ENCODE measurements at regions of chr15 and their contacts with region 1.

Region 1: GRCh38 chr15:85750319-85750806 is 44.4 kb downstream of the KLHL25 start:
- DNase-seq: no peak
- H3K4me3 ChIP-seq: no peak overlapping the region
- H3K4me3 Mint-ChIP-seq: peak overlapping the region in 1 of 8 donors; percentile 45
- H3K27ac ChIP-seq: no peak overlapping the region
- H3K27ac Mint-ChIP-seq: peak overlapping the region in 2 of 7 donors; percentile 70 to 73
- H3K4me1 ChIP-seq: peaks cover 18% of the 10 kb centered on the region
- H3K4me1 Mint-ChIP-seq: peaks cover 15 to 37% (median 20%) of the 10 kb centered on the region in 4 donors
- H3K27me3 ChIP-seq: no peaks in the 10 kb centered on the region
- H3K27me3 Mint-ChIP-seq: no peaks in the 10 kb centered on the region

Region 2: DNA sequence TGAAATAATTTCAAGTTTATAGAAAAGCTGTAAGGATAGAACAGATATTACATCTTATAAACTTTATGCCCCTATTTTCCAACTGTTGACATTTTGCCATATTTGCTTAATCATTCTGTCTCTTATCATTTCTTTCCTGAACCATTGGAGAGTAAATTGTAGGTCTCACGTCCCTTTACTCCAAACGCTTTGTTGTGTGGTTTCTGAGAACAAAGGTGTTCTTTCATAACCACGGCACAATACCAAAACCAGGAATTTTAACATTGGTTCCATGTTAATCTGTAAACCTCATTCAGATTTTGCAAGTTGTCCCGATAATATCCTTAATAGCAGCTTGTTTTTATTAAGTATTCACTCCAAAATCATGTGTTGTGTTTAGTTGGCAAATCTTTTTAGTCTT is 235.2 kb before region 1 on chr15:
- CTCF ChIA-PET with region 1: no interaction called
- POLR2A ChIA-PET with region 1: no interaction called
- intact Hi-C with region 1: no loop called
- DNase-seq: no peak
- H3K4me3 ChIP-seq: no peak overlapping the region
- H3K4me3 Mint-ChIP-seq: no peak overlapping the region
- H3K27ac ChIP-seq: no peak overlapping the region
- H3K27ac Mint-ChIP-seq: peak overlapping the region in 2 of 7 donors; percentile 5 to 26
- H3K4me1 ChIP-seq: peaks cover 15% of the 10 kb centered on the region
- H3K4me1 Mint-ChIP-seq: peaks cover 45 to 72% (median 59%) of the 10 kb centered on the region in 4 donors
- H3K27me3 ChIP-seq: no peaks in the 10 kb centered on the region
- H3K27me3 Mint-ChIP-seq: no peaks in the 10 kb centered on the region

Region 3: DNA sequence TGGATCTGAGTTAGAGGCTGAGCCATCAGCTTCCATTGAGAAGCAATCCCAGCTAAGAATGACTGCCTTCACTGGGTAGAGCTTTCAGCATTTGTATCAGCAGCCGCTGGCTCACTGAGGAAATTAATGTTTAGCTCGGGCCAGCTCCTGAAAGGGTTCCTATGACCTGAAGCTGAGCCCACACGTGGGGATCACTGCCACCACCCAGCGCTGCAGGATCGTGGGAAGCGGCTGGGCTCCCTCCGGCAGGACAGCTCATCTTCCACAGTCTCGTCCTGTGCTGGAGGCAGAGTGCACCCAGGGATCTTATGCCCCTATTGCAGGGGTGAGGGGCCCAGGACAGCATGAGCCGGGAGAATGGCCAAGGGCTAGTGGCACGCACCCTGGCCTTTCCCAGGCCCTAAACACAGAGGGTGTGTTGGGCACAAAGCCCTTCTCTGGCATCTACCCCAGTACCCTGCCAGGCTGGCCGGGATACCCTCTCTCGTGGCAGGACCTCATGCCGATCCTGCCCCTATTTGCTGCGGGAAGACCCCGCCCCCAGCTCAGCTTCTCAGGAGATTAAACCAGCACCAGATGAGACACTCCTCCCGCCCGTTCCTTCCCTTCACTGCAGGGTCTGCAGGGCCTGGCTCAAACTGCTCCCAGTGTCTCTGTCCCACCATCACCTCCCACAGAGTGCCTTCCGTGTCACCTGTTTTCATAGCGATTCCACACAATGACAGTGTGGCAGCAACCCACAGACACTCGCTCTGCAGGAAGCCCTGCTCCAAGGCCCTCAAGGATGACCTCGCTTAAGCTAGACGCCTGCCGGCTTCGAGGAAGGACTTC is 15.9 kb after region 1 on chr15:
- CTCF ChIA-PET with region 1: no interaction called
- POLR2A ChIA-PET with region 1: no interaction called
- intact Hi-C with region 1: no loop called
- DNase-seq: no peak
- H3K4me3 ChIP-seq: no peak overlapping the region
- H3K4me3 Mint-ChIP-seq: no peak overlapping the region
- H3K27ac ChIP-seq: no peak overlapping the region
- H3K27ac Mint-ChIP-seq: no peak overlapping the region
- H3K4me1 ChIP-seq: no peaks in the 10 kb centered on the region
- H3K4me1 Mint-ChIP-seq: peaks cover 0 to 9% (median 4%) of the 10 kb centered on the region in 4 donors
- H3K27me3 ChIP-seq: no peaks in the 10 kb centered on the region
- H3K27me3 Mint-ChIP-seq: no peaks in the 10 kb centered on the region

Region 4: GRCh38 chr15:85785887-85786780 is 35.8 kb after region 1 on chr15:
- CTCF ChIA-PET with region 1: interaction called, 3 read pairs
- POLR2A ChIA-PET with region 1: interaction called, 4 read pairs
- intact Hi-C with region 1: loop called (anchors 5 kb)
- DNase-seq: no peak
- H3K4me3 ChIP-seq: no peak overlapping the region
- H3K4me3 Mint-ChIP-seq: peak overlapping the region; percentile 75 to 85 (median 81)
- H3K27ac ChIP-seq: no peak overlapping the region
- H3K27ac Mint-ChIP-seq: peak overlapping the region; percentile 87 to 98 (median 93)
- H3K4me1 ChIP-seq: peaks cover 26% of the 10 kb centered on the region
- H3K4me1 Mint-ChIP-seq: peaks cover 32 to 55% (median 45%) of the 10 kb centered on the region in 4 donors
- H3K27me3 ChIP-seq: no peaks in the 10 kb centered on the region
- H3K27me3 Mint-ChIP-seq: no peaks in the 10 kb centered on the region

Region 5: GRCh38 chr15:85810075-85810474 is 59.7 kb after region 1 on chr15:
- CTCF ChIA-PET with region 1: no interaction called
- POLR2A ChIA-PET with region 1: no interaction called
- intact Hi-C with region 1: no loop called
- DNase-seq: no peak
- H3K4me3 ChIP-seq: no peak overlapping the region
- H3K4me3 Mint-ChIP-seq: no peak overlapping the region
- H3K27ac ChIP-seq: no peak overlapping the region
- H3K27ac Mint-ChIP-seq: no peak overlapping the region
- H3K4me1 ChIP-seq: no peaks in the 10 kb centered on the region
- H3K4me1 Mint-ChIP-seq: peaks cover 0 to 1% (median 0%) of the 10 kb centered on the region in 4 donors
- H3K27me3 ChIP-seq: no peaks in the 10 kb centered on the region
- H3K27me3 Mint-ChIP-seq: no peaks in the 10 kb centered on the region

Measured in CD4-positive, alpha-beta memory T cell (primary cell).